GM12878 (cell line): ENCODE measurements at regions of chr5 and their contacts with region 1.

Region 1: GRCh38 chr5:107571621-107572536 is 98.9 kb downstream of the EFNA5 start:
- DNase-seq: peak; percentile 83
- ATAC-seq: peak; percentile 88
- H3K4me3 ChIP-seq: peak overlapping the region; percentile 64
- H3K27ac ChIP-seq: peak overlapping the region; percentile 95
- H3K4me1 ChIP-seq: peaks cover 27% of the 10 kb centered on the region
- H3K27me3 ChIP-seq: no peaks in the 10 kb centered on the region
- CTCF ChIP-seq: peak; percentile 92 to 94 (median 94)
- EP300 ChIP-seq: no peak
- POLR2A ChIP-seq: peak; percentile 63
- RAD21 ChIP-seq: peak; percentile 89

Region 2: DNA sequence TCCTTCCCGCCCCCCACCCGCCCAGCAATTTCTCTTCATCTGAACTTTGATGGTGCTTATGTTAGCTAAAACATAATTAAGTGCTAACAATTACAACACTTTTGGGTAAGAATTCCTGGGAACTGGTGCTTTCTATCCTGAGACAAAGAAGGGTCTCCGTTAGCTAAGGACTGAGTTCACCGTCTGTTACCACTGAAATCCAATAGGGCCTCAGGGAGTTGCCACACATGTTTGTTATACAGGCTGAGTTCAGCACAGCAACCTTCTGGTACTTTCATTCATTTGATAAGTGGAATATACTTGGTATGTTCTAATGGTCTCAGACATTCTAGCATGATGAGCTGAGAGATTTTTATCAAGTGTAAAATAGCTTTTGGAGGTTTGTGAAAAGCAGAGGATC is 339.1 kb before region 1 on chr5:
- CTCF ChIA-PET with region 1: no interaction called
- POLR2A ChIA-PET with region 1: no interaction called
- RAD21 ChIA-PET with region 1: no interaction called
- SMC1A ChIA-PET with region 1: no interaction called
- in situ Hi-C with region 1: no loop called
- intact Hi-C with region 1: no loop called
- DNase-seq: no peak
- ATAC-seq: no peak
- H3K4me3 ChIP-seq: no peak overlapping the region
- H3K27ac ChIP-seq: no peak overlapping the region
- H3K4me1 ChIP-seq: no peaks in the 10 kb centered on the region
- H3K27me3 ChIP-seq: no peaks in the 10 kb centered on the region
- CTCF ChIP-seq: no peak
- EP300 ChIP-seq: no peak
- POLR2A ChIP-seq: no peak
- RAD21 ChIP-seq: no peak

Region 3: DNA sequence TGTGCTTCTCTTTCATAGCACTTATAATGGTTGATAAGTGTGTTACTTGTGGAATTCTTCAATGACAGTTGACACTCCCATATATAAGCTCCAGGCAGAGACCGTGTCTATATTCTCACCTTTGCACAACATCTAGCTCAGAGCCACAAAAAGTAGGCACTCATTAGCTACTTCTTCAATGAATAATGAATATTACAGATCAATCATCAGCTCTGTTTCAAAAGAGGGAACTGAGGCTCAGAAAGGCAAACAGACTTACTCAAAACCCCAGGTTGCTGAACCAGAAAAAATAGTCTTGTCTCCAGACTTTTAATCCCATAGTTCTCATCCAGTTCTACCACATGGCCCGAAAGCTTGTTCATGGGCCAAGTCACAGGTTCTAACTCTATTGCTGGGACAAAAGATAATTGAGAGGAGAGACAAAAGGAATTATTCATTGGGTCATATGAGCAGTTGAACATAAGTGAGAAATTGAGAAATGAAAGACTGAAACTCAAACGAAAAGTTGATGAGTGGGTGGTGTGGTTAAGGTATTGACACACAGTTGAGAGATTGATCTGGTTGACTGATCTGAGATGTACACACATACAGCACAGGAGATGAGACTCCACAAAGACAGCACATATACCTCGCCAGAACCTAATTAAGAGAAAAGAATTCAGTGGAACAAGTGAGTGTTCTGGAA is 282.7 kb before region 1 on chr5:
- CTCF ChIA-PET with region 1: interaction called, 8 read pairs
- POLR2A ChIA-PET with region 1: no interaction called
- RAD21 ChIA-PET with region 1: interaction called, 8 read pairs
- SMC1A ChIA-PET with region 1: interaction called, 6 read pairs
- in situ Hi-C with region 1: no loop called
- intact Hi-C with region 1: loop called (anchors 5 kb)
- DNase-seq: peak; percentile 91
- ATAC-seq: peak; percentile 94
- H3K4me3 ChIP-seq: no peak overlapping the region
- H3K27ac ChIP-seq: peak overlapping the region; percentile 14; the same call in 1 of the 2 replicates
- H3K4me1 ChIP-seq: peaks cover 23% of the 10 kb centered on the region
- H3K27me3 ChIP-seq: no peaks in the 10 kb centered on the region; a peak in 1 of 4 replicates
- CTCF ChIP-seq: no peak
- EP300 ChIP-seq: peak; percentile 92 to 95
- POLR2A ChIP-seq: no peak
- RAD21 ChIP-seq: no peak

Region 4: DNA sequence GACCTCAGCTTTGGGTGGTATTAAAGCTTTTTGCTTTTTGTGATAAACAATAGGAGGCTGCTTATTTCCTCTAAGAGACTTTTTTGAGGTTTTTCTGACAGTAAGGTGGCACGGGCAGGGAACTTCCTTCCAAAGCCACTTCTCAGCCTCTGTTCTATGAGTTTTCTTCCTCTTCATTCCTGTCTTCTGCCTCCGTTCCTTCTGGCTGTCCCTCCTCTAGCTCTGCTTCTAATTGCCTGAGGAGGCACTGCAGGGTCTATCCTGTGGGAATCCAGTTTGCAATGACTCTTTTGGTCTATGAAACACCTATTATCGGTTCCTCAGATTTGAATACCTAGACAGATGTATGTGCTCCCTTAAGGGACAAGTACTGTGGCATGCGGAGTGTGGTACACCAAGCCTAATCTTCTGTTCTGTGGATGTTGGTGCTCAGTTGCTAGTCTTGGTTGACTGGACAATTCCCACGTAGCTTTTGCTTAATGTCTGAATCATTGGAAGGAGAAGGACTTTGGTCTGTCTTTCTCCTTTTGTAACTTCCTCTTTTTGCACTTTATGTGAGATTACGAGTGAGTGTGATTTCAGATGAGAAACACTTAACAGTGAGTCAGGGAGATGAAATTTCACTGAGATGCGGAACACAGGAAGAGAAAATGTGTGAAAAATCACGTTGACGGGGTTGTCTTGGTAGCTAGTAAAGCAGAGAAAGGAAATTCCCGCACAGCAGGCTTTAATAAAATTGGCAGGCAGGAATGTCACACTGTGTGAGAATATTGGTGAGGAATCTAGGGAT is 206.4 kb before region 1 on chr5:
- CTCF ChIA-PET with region 1: interaction called, 12 read pairs
- POLR2A ChIA-PET with region 1: interaction called, 12 read pairs
- RAD21 ChIA-PET with region 1: interaction called, 42 read pairs
- SMC1A ChIA-PET with region 1: interaction called, 30 read pairs
- in situ Hi-C with region 1: no loop called
- intact Hi-C with region 1: loop called (anchors 1 kb)
- DNase-seq: peak; percentile 92
- ATAC-seq: peak; percentile 81
- H3K4me3 ChIP-seq: 0 out of 2 replicates have a peak overlapping the region, but pooled peaks have one; percentile 6
- H3K27ac ChIP-seq: peak overlapping the region; percentile 47
- H3K4me1 ChIP-seq: peaks cover 21% of the 10 kb centered on the region
- H3K27me3 ChIP-seq: no peaks in the 10 kb centered on the region
- CTCF ChIP-seq: 0 out of 6 replicates have a peak, but pooled peaks of 1 of the 3 experiments have one; percentile 3
- EP300 ChIP-seq: peak; percentile 12 to 32; a peak in 2 of 4 replicates
- POLR2A ChIP-seq: no peak
- RAD21 ChIP-seq: no peak

Region 5: DNA sequence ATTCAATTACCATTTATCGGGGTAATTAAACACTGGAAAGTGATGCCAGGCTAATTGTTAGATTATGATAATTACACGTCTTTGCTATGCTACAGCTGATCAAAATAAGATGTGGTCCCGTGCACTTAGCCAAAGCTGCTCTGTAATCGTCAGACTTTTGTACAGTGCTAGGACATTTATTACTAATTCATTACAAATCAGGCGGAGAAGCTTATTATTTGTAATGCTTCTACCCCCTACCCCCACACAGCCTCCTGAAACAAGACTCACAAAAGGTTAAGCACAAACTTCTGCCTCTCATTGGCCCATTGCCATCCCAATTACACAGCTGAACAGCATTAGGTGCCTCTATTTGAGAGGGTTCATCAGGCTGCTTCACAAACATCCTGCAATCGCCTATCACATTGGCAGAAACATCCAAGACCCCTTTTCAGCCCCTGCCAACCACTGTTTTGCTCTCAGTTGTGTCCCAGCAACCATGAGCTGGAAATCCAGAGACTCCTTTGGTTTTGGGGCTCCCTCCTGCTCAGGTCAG is 133.8 kb before region 1 on chr5:
- CTCF ChIA-PET with region 1: interaction called, 6 read pairs
- POLR2A ChIA-PET with region 1: no interaction called
- RAD21 ChIA-PET with region 1: interaction called, 5 read pairs
- SMC1A ChIA-PET with region 1: interaction called, 14 read pairs
- in situ Hi-C with region 1: no loop called
- intact Hi-C with region 1: no loop called
- DNase-seq: no peak
- ATAC-seq: no peak
- H3K4me3 ChIP-seq: no peak overlapping the region
- H3K27ac ChIP-seq: no peak overlapping the region
- H3K4me1 ChIP-seq: no peaks in the 10 kb centered on the region
- H3K27me3 ChIP-seq: no peaks in the 10 kb centered on the region
- CTCF ChIP-seq: no peak
- EP300 ChIP-seq: no peak
- POLR2A ChIP-seq: no peak
- RAD21 ChIP-seq: no peak

Region 6: GRCh38 chr5:107476783-107477182 is 95.1 kb before region 1 on chr5:
- CTCF ChIA-PET with region 1: interaction called, 17 read pairs
- POLR2A ChIA-PET with region 1: interaction called, 7 read pairs
- RAD21 ChIA-PET with region 1: interaction called, 29 read pairs
- SMC1A ChIA-PET with region 1: interaction called, 53 read pairs
- in situ Hi-C with region 1: no loop called
- intact Hi-C with region 1: loop called (anchors 1 kb)
- DNase-seq: peak; percentile 80
- ATAC-seq: peak; percentile 90
- H3K4me3 ChIP-seq: no peak overlapping the region
- H3K27ac ChIP-seq: peak overlapping the region; percentile 50
- H3K4me1 ChIP-seq: peaks cover 23% of the 10 kb centered on the region
- H3K27me3 ChIP-seq: no peaks in the 10 kb centered on the region; a peak in 1 of 4 replicates
- CTCF ChIP-seq: no peak
- EP300 ChIP-seq: peak; percentile 83 to 99
- POLR2A ChIP-seq: no peak
- RAD21 ChIP-seq: 0 out of 2 replicates have a peak, but pooled peaks have one; percentile 4

Region 7: DNA sequence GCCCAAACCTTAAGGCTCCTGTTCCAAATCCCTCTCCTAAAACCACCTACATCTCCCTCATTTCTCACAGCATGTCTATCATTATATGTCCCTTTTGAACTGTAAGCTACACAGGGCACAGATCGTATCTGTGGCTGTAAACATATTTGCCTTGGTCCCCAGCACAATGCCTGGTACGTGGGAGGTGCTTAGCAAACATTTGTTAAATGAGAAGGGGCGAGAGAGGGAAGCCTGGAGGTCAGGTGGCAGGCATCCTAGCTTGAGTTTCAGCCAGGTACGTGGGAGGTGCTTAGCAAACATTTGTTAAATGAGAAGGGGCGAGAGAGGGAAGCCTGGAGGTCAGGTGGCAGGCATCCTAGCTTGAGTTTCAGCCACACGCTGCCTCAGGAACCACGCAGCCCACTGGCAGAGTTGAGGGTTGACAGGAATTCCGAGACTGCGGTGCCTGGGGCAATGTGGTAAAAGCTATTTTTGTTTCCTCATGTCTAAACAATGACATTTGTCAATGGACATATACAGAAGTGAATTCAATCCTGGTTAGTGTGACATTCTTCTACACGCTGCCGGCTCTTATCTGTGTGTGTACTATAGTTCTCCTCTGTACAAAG is 14.7 kb before region 1 on chr5:
- CTCF ChIA-PET with region 1: interaction called, 16 read pairs
- POLR2A ChIA-PET with region 1: interaction called, 4 read pairs
- RAD21 ChIA-PET with region 1: interaction called, 17 read pairs
- SMC1A ChIA-PET with region 1: interaction called, 106 read pairs
- in situ Hi-C with region 1: no loop called
- intact Hi-C with region 1: no loop called
- DNase-seq: no peak
- ATAC-seq: no peak
- H3K4me3 ChIP-seq: no peak overlapping the region
- H3K27ac ChIP-seq: no peak overlapping the region
- H3K4me1 ChIP-seq: peaks cover 4% of the 10 kb centered on the region; the same call in 1 of the 2 replicates
- H3K27me3 ChIP-seq: no peaks in the 10 kb centered on the region; a peak in 1 of 4 replicates
- CTCF ChIP-seq: no peak
- EP300 ChIP-seq: no peak
- POLR2A ChIP-seq: no peak
- RAD21 ChIP-seq: no peak

Region 8: GRCh38 chr5:107743373-107744000 is 171.6 kb after region 1 on chr5:
- CTCF ChIA-PET with region 1: no interaction called
- POLR2A ChIA-PET with region 1: no interaction called
- RAD21 ChIA-PET with region 1: no interaction called
- SMC1A ChIA-PET with region 1: no interaction called
- in situ Hi-C with region 1: no loop called
- intact Hi-C with region 1: no loop called
- DNase-seq: no peak
- ATAC-seq: no peak
- H3K4me3 ChIP-seq: no peak overlapping the region
- H3K27ac ChIP-seq: no peak overlapping the region
- H3K4me1 ChIP-seq: no peaks in the 10 kb centered on the region
- H3K27me3 ChIP-seq: no peaks in the 10 kb centered on the region; a peak in 1 of 4 replicates
- CTCF ChIP-seq: no peak
- EP300 ChIP-seq: no peak
- POLR2A ChIP-seq: no peak
- RAD21 ChIP-seq: no peak

Region 9: DNA sequence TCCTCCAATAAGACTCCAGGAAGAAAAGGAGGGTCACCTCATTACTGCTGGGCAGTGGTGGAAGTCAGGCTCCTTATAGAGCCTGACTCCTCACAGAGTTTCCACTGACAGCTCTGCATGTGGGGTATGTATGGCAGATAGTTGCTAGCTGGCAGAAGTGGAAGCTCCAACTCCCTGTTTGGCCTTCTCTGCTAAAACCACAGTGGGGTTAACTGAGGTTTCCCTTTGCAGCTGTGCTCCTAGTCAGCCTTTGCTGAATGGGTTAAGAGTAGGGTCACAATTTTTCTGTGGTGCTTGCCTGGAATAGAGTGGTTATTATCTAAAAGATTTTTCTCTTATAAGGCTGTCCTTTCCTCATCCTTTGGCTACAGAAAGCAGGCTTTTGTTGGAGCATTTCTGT is 482.5 kb after region 1 on chr5:
- CTCF ChIA-PET with region 1: no interaction called
- POLR2A ChIA-PET with region 1: no interaction called
- RAD21 ChIA-PET with region 1: no interaction called
- SMC1A ChIA-PET with region 1: no interaction called
- in situ Hi-C with region 1: no loop called
- intact Hi-C with region 1: no loop called
- DNase-seq: no peak
- ATAC-seq: no peak
- H3K4me3 ChIP-seq: no peak overlapping the region
- H3K27ac ChIP-seq: no peak overlapping the region
- H3K4me1 ChIP-seq: no peaks in the 10 kb centered on the region
- H3K27me3 ChIP-seq: no peaks in the 10 kb centered on the region
- CTCF ChIP-seq: no peak
- EP300 ChIP-seq: no peak
- POLR2A ChIP-seq: no peak
- RAD21 ChIP-seq: no peak

Region 10: GRCh38 chr5:108345541-108346171 is 773.8 kb after region 1 on chr5:
- CTCF ChIA-PET with region 1: no interaction called
- POLR2A ChIA-PET with region 1: no interaction called
- RAD21 ChIA-PET with region 1: interaction called, 5 read pairs
- SMC1A ChIA-PET with region 1: interaction called, 3 read pairs
- in situ Hi-C with region 1: no loop called
- intact Hi-C with region 1: loop called (anchors 10 kb)
- DNase-seq: peak; percentile 5
- ATAC-seq: peak; percentile 86
- H3K4me3 ChIP-seq: no peak overlapping the region
- H3K27ac ChIP-seq: no peak overlapping the region
- H3K4me1 ChIP-seq: no peaks in the 10 kb centered on the region
- H3K27me3 ChIP-seq: no peaks in the 10 kb centered on the region
- CTCF ChIP-seq: peak; percentile 19 to 55 (median 30); a peak in 3 of 6 replicates
- EP300 ChIP-seq: no peak
- POLR2A ChIP-seq: no peak
- RAD21 ChIP-seq: peak; percentile 48